Sigmoid colon (tissue), 7 donors: ENCODE measurements at regions of chr16 and their contacts with region 1.

Region 1: DNA sequence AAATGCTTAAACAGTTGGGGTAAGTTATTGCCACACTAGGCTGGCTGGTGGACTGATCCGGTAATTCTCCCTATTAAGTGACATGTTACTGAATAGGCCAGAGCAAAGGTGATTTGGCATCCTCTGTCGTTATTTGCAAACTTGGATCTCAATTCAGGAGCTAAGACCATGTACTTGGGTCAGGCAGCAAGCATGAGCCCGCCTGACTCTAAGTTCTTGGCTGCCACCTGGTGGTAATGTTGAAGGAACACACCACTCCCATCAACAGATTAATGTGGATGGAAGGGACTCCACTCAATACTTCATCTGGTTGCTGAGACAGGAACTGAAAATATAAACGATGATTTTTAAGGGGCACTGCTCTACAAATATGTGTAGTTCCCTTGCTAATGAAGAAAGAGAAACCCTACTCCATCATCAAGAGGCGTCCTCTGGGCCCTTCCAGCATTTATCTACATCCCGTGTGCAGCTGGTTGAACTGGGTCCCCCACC is 70.8 kb downstream of the EMP2 start:
- DNase-seq: peak; percentile 76
- H3K4me3 ChIP-seq: no peak overlapping the region
- H3K27ac ChIP-seq: no peak overlapping the region
- H3K4me1 ChIP-seq: peaks cover 0 to 4% (median 3%) of the 10 kb centered on the region in 4 donors
- H3K27me3 ChIP-seq: no peaks in the 10 kb centered on the region
- CTCF ChIP-seq: peak; percentile 43 to 78 (median 74)
- EP300 ChIP-seq: no peak
- POLR2A ChIP-seq: no peak

Region 2: DNA sequence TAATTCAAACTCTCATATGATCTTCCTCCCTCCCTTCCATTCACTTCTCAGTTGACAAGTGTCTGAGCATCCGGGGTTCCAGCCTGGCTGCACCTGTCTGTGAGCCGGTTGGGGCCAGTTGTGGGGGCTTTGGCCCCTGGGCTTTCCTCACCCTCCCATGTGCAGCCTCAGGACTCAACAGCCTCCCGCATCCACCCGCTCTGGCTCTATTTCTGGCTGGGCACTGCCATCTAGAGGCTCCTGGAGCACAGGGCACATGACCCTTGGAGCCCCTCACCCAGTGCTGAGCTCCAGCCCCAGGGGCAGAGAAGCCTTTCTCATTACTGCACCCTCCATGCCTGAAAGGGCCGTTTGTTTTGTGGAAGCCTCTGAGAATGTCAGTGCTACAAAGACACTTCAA is 1374.8 kb before region 1 on chr16:
- intact Hi-C with region 1: loop called (anchors 10 kb)
- DNase-seq: peak; percentile 65
- H3K4me3 ChIP-seq: no peak overlapping the region
- H3K27ac ChIP-seq: no peak overlapping the region
- H3K4me1 ChIP-seq: peaks cover 0 to 9% (median 6%) of the 10 kb centered on the region in 4 donors
- H3K27me3 ChIP-seq: no peaks in the 10 kb centered on the region
- CTCF ChIP-seq: peak in 2 of 4 experiments; percentile 25 to 42
- EP300 ChIP-seq: no peak
- POLR2A ChIP-seq: no peak

Region 3: DNA sequence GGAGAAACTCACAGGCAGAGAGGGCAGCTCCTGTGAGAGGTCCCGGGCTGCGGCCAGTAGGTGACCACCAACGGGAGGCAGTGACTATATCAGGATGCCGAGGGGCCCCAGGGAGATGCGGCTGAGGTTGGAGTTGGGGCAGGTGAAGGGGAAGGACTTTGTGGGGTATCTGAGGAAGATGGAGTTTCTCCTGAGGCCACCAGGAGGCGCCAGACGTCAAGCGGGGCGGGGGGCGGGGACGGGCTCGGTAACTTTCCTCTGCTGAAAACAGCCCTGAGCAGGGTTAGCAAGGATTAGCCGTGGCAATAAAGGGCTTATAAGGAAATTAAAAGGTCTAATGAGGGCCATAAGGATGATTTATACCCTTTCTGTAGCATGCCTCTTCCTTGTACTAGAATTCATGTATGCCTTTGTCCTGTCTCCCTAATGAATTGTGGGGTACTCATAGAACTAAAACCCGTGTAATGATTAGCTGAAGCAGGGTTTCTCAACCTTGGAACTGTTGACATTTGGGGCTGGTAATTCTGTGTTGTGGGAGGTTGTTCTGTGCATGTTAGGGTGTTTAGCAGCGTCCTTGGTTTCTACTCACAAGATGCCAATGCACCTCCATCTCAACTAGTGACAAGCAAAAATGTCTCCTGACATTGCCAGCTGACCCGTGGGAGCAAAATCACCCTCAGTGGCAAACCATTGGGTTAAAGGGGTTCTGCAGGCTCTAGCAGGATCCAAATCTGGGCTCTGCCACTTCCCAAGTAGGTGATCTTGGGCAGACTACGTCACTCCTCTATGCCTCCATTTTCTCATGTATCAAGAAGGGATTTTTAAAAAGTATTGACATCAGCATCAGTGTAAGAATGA is 252.6 kb before region 1 on chr16:
- intact Hi-C with region 1: loop called (anchors 1 kb)
- DNase-seq: no peak
- H3K4me3 ChIP-seq: no peak overlapping the region
- H3K27ac ChIP-seq: no peak overlapping the region
- H3K4me1 ChIP-seq: peaks cover 0 to 6% (median 0%) of the 10 kb centered on the region in 4 donors
- H3K27me3 ChIP-seq: peaks cover 0 to 23% (median 0%) of the 10 kb centered on the region in 3 donors
- CTCF ChIP-seq: peak; percentile 35 to 81 (median 52)
- EP300 ChIP-seq: no peak
- POLR2A ChIP-seq: no peak

Region 4: DNA sequence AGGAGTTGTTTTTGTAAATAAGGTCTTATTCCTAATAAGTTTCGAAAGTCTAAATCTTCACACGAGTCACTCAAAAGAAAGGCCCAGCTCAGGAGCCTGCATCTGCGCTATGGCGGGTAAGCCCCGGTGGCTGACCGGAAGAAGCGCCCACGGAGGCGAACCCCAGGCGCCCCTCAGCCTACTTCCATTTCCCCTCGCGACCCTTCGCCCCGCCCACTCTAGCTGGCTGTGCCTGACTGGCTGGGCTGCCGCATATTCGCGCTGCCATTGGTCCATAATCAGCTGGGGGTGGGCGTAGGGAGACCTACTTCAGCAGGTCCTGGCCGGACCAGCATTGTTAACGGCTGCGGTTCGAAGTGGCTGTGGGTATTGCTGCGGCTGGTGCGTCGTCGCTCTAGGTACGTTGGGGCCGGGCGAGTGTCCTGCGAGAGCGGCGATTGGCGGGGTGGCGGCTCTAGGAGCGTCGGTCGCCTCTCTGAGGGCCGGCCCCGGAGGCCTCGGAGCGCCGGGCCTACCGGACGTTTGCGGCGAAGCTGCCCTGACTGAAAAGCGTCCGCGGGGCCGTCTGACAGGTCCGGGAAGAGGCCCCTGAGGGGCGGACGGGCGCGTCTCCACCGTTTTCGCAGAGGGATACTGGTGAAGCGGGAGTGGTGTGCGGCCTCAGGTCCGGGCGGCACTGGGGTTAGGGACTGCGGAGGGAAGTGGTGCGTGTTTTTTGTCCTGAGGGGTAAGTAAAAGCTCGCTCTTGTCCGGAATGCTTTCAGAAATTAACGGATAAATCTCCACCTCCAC is 123.7 kb before region 1 on chr16 and contains the start of gene ATF7IP2:
- intact Hi-C with region 1: loop called (anchors 5 kb)
- DNase-seq: peak; percentile 88
- H3K4me3 ChIP-seq: peak within 1 kb of the TSS; percentile 53 to 67 (median 60)
- H3K27ac ChIP-seq: peak within 1 kb of the TSS; percentile 67 to 81 (median 74)
- H3K4me1 ChIP-seq: peaks cover 0 to 14% (median 5%) of the 10 kb centered on the region in 4 donors
- H3K27me3 ChIP-seq: no peaks in the 10 kb centered on the region
- CTCF ChIP-seq: no peak
- EP300 ChIP-seq: no peak
- POLR2A ChIP-seq: peak; percentile 19 to 34
- total RNA-seq, gene ATF7IP2: 9.3 to 22.0 (median 14.3) TPM

Region 5: DNA sequence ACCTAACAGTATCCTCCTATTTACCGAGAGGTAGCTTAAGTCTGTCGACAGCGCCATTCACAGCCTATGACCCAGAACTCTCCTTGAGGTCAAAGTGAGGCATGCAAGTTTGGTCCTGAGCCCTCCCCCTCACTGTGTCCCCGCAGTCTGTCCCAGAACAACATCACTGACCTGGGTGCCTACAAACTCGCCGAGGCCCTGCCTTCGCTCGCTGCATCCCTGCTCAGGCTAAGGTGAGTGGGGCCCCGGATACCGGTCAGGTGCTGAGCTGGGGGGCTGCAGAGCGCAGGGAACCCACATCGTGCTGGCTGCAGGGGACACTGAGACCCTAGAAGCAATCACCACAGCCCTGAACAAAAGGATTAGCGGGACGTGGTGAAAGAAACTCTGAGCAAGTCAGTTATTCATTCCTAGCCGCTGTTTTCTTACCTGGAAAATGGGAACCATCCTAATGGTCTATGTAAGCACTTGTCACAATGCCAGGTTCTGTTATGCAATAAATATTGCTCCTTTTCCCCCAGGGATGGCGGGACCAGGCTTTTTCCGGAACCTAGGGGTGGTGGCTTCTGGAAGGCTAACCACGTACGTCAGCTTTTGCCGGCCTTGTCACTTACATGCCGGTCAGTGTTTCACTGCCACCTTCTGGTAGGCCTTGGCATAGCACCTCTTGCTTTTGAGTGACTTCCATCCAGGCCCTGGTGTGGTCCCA is 408.9 kb after region 1 on chr16:
- intact Hi-C with region 1: loop called (anchors 5 kb)
- DNase-seq: peak; percentile 97
- H3K4me3 ChIP-seq: peak overlapping the region in 1 of 4 donors; percentile 26
- H3K27ac ChIP-seq: peak overlapping the region; percentile 3 to 44 (median 22)
- H3K4me1 ChIP-seq: peaks cover 0 to 39% (median 28%) of the 10 kb centered on the region in 4 donors
- H3K27me3 ChIP-seq: no peaks in the 10 kb centered on the region
- CTCF ChIP-seq: peak; percentile 81 to 96 (median 95)
- EP300 ChIP-seq: no peak
- POLR2A ChIP-seq: no peak